Left ventricle myocardium superior (tissue), 1 donor: ENCODE measurements at regions of chr4 and their contacts with region 1.

Region 1: GRCh38 chr4:26081795-26082498 is 167.9 kb downstream of the SMIM20 start:
- DNase-seq: no peak
- ATAC-seq: peak; percentile 44

Region 2: GRCh38 chr4:26404743-26405206 is 322.8 kb after region 1 on chr4:
- intact Hi-C with region 1: loop called (anchors 5 kb)
- DNase-seq: no peak
- ATAC-seq: peak; percentile 41